ENCODE measurements at regions of chr17 and their contacts with region 1.

Region 1: DNA sequence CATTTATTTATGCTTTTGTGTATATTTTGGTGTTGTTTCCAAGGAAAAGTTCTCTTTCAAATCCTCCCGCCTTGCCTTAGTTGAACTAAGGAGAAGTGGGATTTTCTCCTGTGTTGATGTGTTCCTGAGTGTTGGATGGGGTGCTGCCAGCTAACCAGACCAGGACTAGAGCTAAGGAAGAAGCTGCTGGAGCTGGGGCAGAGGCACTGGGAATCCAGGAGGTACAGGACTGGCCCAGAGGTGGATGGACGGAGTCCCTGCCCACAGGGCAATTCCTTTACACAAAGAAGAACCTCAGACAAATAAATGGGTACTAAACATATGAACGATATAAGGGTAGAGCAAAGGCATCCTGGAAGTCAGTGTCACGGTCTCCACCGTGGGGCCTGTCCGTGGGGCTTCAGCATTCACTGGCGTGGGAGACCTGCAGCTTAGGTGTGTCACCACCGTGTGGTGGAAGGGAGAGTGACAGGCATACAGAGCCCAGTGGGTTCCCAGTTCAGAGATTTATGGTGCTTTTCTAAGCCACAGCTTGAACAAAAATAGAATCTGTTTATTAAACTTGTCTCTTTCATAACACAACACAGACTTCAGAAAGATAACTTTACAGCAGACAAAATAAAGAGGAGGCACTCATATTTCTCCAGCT is 270.7 kb downstream of the NTN1 start:
- DNase-seq: peak; percentile 51
- H3K4me3 ChIP-seq: no peak overlapping the region
- H3K27ac ChIP-seq: no peak overlapping the region
- H3K4me1 ChIP-seq: no peaks in the 10 kb centered on the region
- H3K27me3 ChIP-seq: no peaks in the 10 kb centered on the region
- CTCF ChIP-seq: peak; percentile 65

Region 2: GRCh38 chr17:8991514-8992285 is 300.3 kb before region 1 on chr17:
- intact Hi-C with region 1: loop called (anchors 5 kb)
- DNase-seq: peak; percentile 74
- H3K4me3 ChIP-seq: no peak overlapping the region
- H3K27ac ChIP-seq: no peak overlapping the region
- H3K4me1 ChIP-seq: no peaks in the 10 kb centered on the region
- H3K27me3 ChIP-seq: no peaks in the 10 kb centered on the region
- CTCF ChIP-seq: peak; percentile 84

Region 3: GRCh38 chr17:9307292-9308042 is 15.4 kb after region 1 on chr17:
- intact Hi-C with region 1: no loop called
- DNase-seq: no peak
- H3K4me3 ChIP-seq: no peak overlapping the region
- H3K27ac ChIP-seq: no peak overlapping the region
- H3K4me1 ChIP-seq: no peaks in the 10 kb centered on the region
- H3K27me3 ChIP-seq: no peaks in the 10 kb centered on the region
- CTCF ChIP-seq: no peak

Measured in colonic mucosa (tissue), 4 donors.